Activated CD8-positive, alpha-beta T cell treated with anti-CD3 and anti-CD28 coated beads for 36 hours (primary cell): ENCODE measurements at regions of chr2 and their contacts with region 1.

Region 1: GRCh38 chr2:105789745-105790460 is 45.2 kb downstream of the NCK2 start:
- DNase-seq: peak; percentile 87
- ATAC-seq: peak; percentile 82
- H3K4me3 Mint-ChIP-seq: peak overlapping the region; percentile 69
- H3K27ac Mint-ChIP-seq: peak overlapping the region; percentile 97
- H3K4me1 Mint-ChIP-seq: peaks cover 92% of the 10 kb centered on the region
- H3K27me3 Mint-ChIP-seq: no peaks in the 10 kb centered on the region
- CTCF ChIP-seq: no peak

Region 2: DNA sequence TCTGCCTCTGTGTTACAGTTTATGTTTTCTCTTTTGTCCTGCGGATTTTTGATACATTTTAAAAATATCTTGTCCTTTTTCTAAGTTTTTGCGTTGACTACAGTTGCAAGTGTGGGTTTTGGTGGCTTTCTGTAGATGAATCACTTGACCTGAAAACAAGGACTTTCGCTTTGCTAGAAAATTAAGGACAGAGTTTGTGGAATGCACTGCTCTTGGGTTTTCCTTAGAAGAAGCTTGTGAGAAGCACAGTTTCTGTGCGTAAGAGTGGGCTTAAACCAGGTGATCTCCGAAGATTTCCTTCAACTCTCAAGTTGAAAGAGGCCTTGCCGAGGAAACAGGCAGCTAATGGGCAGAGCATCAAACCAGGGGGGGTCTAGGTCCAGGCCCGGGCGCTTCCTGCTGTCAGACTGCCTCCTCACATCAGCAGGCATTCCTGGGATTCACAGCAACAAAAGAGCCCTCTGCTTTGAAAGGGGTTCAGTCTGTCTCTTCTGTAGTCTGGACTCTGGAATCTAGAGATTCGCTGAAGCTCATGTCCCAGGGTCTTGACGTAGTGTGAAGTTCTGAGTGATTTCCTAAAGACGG is 27.9 kb before region 1 on chr2:
- CTCF ChIA-PET with region 1: interaction called, 10 read pairs
- POLR2A ChIA-PET with region 1: interaction called, 3 read pairs
- intact Hi-C with region 1: no loop called
- DNase-seq: no peak
- ATAC-seq: peak; percentile 13
- H3K4me3 Mint-ChIP-seq: peak overlapping the region; percentile 62
- H3K27ac Mint-ChIP-seq: peak overlapping the region; percentile 87
- H3K4me1 Mint-ChIP-seq: peaks cover 94% of the 10 kb centered on the region
- H3K27me3 Mint-ChIP-seq: no peaks in the 10 kb centered on the region
- CTCF ChIP-seq: no peak

Region 3: GRCh38 chr2:105880321-105881036 is 90.6 kb after region 1 on chr2:
- CTCF ChIA-PET with region 1: no interaction called
- POLR2A ChIA-PET with region 1: no interaction called
- intact Hi-C with region 1: no loop called
- DNase-seq: no peak
- ATAC-seq: no peak
- H3K4me3 Mint-ChIP-seq: no peak overlapping the region
- H3K27ac Mint-ChIP-seq: peak overlapping the region; percentile 44
- H3K4me1 Mint-ChIP-seq: peaks cover 84% of the 10 kb centered on the region
- H3K27me3 Mint-ChIP-seq: no peaks in the 10 kb centered on the region
- CTCF ChIP-seq: no peak